ENCODE measurements at regions of chr11 and their contacts with region 1.

Region 1: GRCh38 chr11:119205574-119206510 is at the start of gene CBL:
- DNase-seq: peak; percentile 90 to 92
- ATAC-seq: peak; percentile 93 to 96
- H3K4me3 ChIP-seq: peak within 1 kb of the TSS; percentile 73 to 98 (median 90)
- H3K27ac ChIP-seq: peak within 1 kb of the TSS; percentile 89 to 98 (median 94)
- H3K4me1 ChIP-seq: peaks cover 15 to 16% of the 10 kb centered on the region in 2 donors
- H3K27me3 ChIP-seq: no peaks in the 10 kb centered on the region
- CTCF ChIP-seq: peak; percentile 80 to 99 (median 92)
- POLR2A ChIP-seq: peak; percentile 83 to 84
- total RNA-seq, gene CBL: 3.0 to 6.7 (median 4.5) TPM

Region 2: GRCh38 chr11:118956094-118956846 is 249.6 kb before region 1 on chr11 and contains the start of gene UPK2:
- in situ Hi-C with region 1: no loop called
- intact Hi-C with region 1: no loop called
- DNase-seq: peak; percentile 74 to 82
- ATAC-seq: peak; percentile 95 to 97
- H3K4me3 ChIP-seq: no peak within 1 kb of the TSS
- H3K27ac ChIP-seq: no peak within 1 kb of the TSS
- H3K4me1 ChIP-seq: no peaks in the 10 kb centered on the region
- H3K27me3 ChIP-seq: no peaks in the 10 kb centered on the region
- CTCF ChIP-seq: peak; percentile 94 to 97 (median 96)
- POLR2A ChIP-seq: no peak
- total RNA-seq, gene UPK2: not detected

Region 3: DNA sequence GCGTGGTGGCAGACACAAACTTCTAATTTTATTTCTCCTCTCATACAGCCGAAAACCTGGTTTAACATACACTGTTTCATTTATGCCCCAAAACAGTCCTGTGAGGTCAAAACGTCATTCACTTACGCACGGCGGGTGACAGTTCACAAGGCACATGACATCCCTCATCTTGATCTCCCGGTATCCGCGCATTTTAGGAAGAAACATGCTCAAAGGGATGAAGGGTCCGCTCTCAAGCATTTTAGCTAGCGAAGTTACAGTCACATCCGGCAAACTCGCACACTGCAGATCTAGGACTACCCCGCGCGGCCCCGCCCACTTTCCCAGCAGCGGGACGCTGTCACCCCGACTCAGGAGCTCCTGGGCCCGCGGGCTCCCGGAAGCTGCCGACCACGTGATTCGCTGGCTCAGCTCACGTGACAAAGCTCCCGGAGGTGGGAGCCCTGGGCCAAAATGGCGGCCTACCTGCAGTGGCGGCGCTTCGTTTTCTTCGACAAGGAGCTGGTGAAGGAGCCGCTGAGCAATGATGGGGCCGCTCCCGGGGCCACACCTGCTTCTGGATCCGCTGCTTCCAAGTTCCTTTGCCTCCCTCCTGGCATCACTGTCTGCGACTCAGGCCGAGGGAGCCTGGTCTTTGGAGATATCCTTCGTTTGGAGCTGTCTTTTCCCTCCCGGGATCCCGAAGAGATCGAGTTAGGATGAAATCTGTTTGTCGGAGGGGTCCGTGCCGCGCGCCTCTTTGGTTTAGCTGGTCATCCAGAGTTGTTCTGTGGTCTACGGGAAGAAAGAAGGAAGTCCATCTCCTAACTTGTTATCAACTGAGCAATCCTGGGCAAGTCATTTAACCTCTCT is 138.2 kb before region 1 on chr11 and contains the start of gene VPS11:
- in situ Hi-C with region 1: no loop called
- intact Hi-C with region 1: loop called (anchors 10 kb)
- DNase-seq: peak; percentile 95 to 97
- ATAC-seq: peak; percentile 95 to 96
- H3K4me3 ChIP-seq: peak within 1 kb of the TSS; percentile 84 to 97 (median 91)
- H3K27ac ChIP-seq: peak within 1 kb of the TSS; percentile 85 to 91 (median 90)
- H3K4me1 ChIP-seq: peaks cover 25 to 26% of the 10 kb centered on the region in 2 donors
- H3K27me3 ChIP-seq: no peaks in the 10 kb centered on the region
- CTCF ChIP-seq: peak in 1 of 5 experiments; percentile 26
- POLR2A ChIP-seq: peak; percentile 70 to 71
- total RNA-seq, gene VPS11: 16.5 to 25.9 (median 20.3) TPM

Region 4: DNA sequence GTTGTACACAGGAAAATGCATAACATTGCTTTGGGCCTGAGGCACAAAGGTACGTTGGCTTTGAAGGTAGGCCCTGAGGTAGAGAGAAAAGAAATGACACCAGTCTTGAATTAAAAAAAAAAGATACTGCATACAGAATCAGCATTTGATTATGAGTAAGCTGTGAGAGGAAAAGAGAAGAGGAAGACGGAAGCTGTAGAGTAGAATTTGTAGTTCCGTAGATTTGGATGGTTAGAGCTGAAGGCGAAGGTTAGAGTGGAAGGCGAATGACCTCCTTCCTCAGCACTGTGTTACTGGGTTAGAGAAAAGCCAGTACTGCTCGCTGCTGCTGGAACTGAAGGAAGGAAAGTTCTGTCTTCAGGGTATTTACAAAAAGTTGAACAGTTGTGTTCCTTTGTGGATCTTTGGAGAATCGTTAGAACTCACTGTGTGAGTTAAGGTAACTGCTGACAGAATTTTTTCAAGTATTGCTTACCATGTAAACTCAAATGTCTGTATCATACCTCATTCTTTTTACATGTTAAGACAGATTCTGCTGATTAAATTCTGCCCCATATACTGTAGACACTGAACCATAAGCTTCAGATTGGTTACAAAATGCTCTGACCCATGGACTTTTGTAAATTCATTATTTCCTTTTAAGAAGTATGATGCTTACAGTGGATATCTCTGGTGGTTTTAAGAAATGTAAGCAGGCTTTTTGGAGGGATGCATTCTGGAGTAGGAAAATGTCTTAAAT is 60.8 kb after region 1 on chr11:
- in situ Hi-C with region 1: no loop called
- intact Hi-C with region 1: loop called (anchors 5 kb)
- DNase-seq: no peak
- ATAC-seq: no peak
- H3K4me3 ChIP-seq: no peak overlapping the region
- H3K27ac ChIP-seq: no peak overlapping the region
- H3K4me1 ChIP-seq: peaks cover 14 to 26% of the 10 kb centered on the region in 2 donors
- H3K27me3 ChIP-seq: no peaks in the 10 kb centered on the region
- CTCF ChIP-seq: no peak
- POLR2A ChIP-seq: no peak

Region 5: DNA sequence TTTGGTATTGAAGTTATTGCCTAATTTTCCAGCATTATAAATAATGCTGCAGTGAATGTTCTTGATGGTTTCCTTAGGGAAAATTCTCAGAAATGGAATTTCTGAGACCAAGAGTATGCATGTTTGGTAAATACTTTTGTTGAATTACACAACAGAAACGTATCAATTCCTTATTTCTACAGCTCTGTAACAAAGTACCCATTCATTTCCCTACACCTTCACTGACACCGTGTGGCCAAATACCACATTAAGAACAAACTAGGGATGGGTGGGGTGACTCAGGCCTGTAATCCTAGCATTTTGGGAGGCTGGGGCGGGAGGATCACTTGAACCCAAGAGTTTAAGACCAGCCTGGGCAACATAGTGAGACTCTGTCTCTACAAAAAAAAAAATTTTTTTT is 89.3 kb after region 1 on chr11:
- in situ Hi-C with region 1: no loop called
- intact Hi-C with region 1: loop called (anchors 5 kb)
- DNase-seq: no peak
- ATAC-seq: no peak
- H3K4me3 ChIP-seq: no peak overlapping the region
- H3K27ac ChIP-seq: no peak overlapping the region
- H3K4me1 ChIP-seq: peaks cover 27 to 33% of the 10 kb centered on the region in 2 donors
- H3K27me3 ChIP-seq: no peaks in the 10 kb centered on the region
- CTCF ChIP-seq: no peak
- POLR2A ChIP-seq: no peak

Region 6: DNA sequence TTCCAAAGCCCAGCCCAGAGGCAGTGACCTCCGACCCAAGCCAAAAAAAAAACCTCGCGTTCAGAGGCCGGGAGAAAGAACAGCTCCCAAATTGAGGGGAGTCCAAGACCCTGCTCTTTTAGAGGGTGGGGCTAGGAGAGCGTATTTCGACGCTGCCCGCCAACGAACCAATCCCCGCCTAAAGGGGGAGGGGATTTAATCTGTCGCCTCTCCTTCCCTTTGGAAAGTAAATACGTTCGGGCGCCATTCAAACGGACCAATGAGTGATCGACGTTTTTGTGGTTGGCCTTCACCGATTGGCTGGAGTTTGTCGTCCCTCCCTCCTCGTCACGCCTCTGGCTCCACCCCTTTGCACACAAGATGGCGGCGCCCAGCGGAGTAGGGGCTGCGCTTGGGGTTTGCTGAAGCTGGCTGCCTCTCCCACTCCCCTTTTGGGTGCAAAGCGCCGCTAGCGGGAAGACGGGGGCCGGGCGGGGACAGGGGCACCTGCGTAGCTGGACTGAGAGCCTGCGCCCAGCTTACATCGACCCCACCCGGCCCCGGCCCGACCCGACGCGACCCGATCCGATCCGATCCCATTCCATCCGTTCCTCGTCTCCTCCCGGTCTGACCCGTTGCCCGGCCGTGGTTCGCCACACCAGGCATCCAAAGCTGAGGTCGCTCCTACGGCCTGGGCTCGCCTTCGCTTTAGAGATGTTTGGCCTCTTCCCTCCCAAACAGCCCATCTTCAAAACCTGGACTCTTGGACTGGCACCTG is 128.5 kb after region 1 on chr11 and contains the start of gene RNF26:
- in situ Hi-C with region 1: loop called in 2 of 4 experiments (anchors 5 to 10 kb)
- intact Hi-C with region 1: loop called (anchors 5 kb)
- DNase-seq: peak; percentile 98
- ATAC-seq: peak; percentile 97 to 98
- H3K4me3 ChIP-seq: peak within 1 kb of the TSS; percentile 80 to 99 (median 93)
- H3K27ac ChIP-seq: peak within 1 kb of the TSS; percentile 91 to 98 (median 96)
- H3K4me1 ChIP-seq: peaks cover 32 to 38% of the 10 kb centered on the region in 2 donors
- H3K27me3 ChIP-seq: no peaks in the 10 kb centered on the region
- CTCF ChIP-seq: no peak
- POLR2A ChIP-seq: peak; percentile 85 to 86
- total RNA-seq, gene RNF26: 3.8 to 5.1 (median 4.7) TPM

Region 7: GRCh38 chr11:119474682-119475596 is 269.1 kb after region 1 on chr11:
- in situ Hi-C with region 1: no loop called
- intact Hi-C with region 1: loop called (anchors 10 kb)
- DNase-seq: peak; percentile 43 to 53
- ATAC-seq: peak; percentile 61 to 85
- H3K4me3 ChIP-seq: no peak overlapping the region
- H3K27ac ChIP-seq: no peak overlapping the region
- H3K4me1 ChIP-seq: no peaks in the 10 kb centered on the region
- H3K27me3 ChIP-seq: no peaks in the 10 kb centered on the region
- CTCF ChIP-seq: peak; percentile 51 to 85 (median 83)
- POLR2A ChIP-seq: no peak

Measured in gastrocnemius medialis (tissue), 4 donors.